HepG2 (cell line): ENCODE measurements at regions of chr9 and their contacts with region 1.

Region 1: GRCh38 chr9:113650207-113651131 is 186.9 kb downstream of the RGS3 start:
- DNase-seq: peak; percentile 94
- ATAC-seq: peak; percentile 87
- H3K4me3 ChIP-seq: peak overlapping the region in 1 of 3 experiments; percentile 17; a peak in 2 of 6 replicates
- H3K27ac ChIP-seq: peak overlapping the region; percentile 75
- H3K4me1 ChIP-seq: peaks cover 95% of the 10 kb centered on the region
- H3K27me3 ChIP-seq: no peaks in the 10 kb centered on the region
- CTCF ChIP-seq: no peak
- EP300 ChIP-seq: peak in 1 of 2 experiments; percentile 68; a peak in 3 of 4 replicates
- POLR2A ChIP-seq: peak in 1 of 2 experiments; percentile 30; a peak in 1 of 4 replicates
- RAD21 ChIP-seq: no peak

Region 2: GRCh38 chr9:113454914-113455761 is 195.3 kb before region 1 on chr9:
- CTCF ChIA-PET with region 1: no interaction called
- POLR2A ChIA-PET with region 1: interaction called, 5 read pairs
- in situ Hi-C with region 1: no loop called
- intact Hi-C with region 1: loop called (anchors 5 kb)
- DNase-seq: peak; percentile 83
- ATAC-seq: peak; percentile 95
- H3K4me3 ChIP-seq: peak overlapping the region in 1 of 3 experiments; percentile 37; a peak in 1 of 6 replicates
- H3K27ac ChIP-seq: peak overlapping the region; percentile 85
- H3K4me1 ChIP-seq: peaks cover 49% of the 10 kb centered on the region
- H3K27me3 ChIP-seq: no peaks in the 10 kb centered on the region
- CTCF ChIP-seq: no peak
- EP300 ChIP-seq: peak; percentile 29 to 67; a peak in 2 of 4 replicates
- POLR2A ChIP-seq: 0 out of 4 replicates have a peak, but pooled peaks of 1 of the 2 experiments have one; percentile 29
- RAD21 ChIP-seq: no peak

Region 3: DNA sequence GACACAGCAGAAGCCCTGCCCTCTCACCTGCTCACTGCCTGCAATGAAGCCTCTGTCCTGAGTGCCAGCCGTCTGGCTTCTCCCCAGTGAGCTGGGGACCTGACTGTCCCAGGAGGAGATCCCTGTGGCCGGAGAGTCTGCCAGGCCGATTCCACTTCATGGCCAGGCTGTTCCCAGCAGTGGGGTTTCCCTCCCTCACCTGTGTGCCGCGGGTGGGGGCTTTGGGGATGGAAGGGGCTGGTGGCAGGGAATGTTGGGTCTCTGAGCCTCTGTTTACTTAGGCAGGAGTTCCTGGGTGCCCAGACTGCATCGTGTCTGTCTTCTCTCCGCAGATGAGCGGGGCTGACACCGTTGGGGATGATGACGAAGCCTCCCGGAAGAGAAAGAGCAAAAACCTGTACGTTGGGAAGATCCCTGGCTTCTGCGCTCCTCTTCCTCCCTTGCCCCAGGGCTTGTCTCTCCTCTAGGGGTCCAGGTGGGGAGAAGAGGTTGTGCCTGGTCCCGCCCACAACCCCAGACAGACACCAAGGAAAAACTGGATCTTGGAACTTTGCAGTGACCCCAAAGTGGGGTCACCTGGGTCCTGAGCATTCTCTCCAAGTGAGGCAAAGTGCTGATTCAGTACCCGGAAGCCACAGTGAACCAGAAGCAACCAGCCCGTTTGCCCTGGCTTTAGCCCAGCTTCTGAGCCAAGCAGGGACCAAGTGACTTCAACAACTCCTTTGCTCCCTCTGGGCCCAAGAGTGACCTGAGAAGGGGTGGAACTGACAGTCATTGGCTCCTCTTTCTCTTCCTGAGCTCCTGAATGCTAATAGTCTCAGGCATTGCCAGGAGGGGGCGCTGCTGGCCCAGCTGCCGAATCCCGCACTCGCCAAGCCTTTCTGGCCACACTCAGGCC is 59.2 kb before region 1 on chr9:
- CTCF ChIA-PET with region 1: interaction called, 223 read pairs
- POLR2A ChIA-PET with region 1: interaction called, 16 read pairs
- in situ Hi-C with region 1: loop called (anchors 5 kb)
- intact Hi-C with region 1: no loop called
- DNase-seq: peak; percentile 59
- ATAC-seq: peak; percentile 71
- H3K4me3 ChIP-seq: no peak overlapping the region
- H3K27ac ChIP-seq: no peak overlapping the region
- H3K4me1 ChIP-seq: peaks cover 32% of the 10 kb centered on the region
- H3K27me3 ChIP-seq: no peaks in the 10 kb centered on the region
- CTCF ChIP-seq: peak; percentile 96
- EP300 ChIP-seq: no peak
- POLR2A ChIP-seq: no peak
- RAD21 ChIP-seq: peak; percentile 98

Region 4: DNA sequence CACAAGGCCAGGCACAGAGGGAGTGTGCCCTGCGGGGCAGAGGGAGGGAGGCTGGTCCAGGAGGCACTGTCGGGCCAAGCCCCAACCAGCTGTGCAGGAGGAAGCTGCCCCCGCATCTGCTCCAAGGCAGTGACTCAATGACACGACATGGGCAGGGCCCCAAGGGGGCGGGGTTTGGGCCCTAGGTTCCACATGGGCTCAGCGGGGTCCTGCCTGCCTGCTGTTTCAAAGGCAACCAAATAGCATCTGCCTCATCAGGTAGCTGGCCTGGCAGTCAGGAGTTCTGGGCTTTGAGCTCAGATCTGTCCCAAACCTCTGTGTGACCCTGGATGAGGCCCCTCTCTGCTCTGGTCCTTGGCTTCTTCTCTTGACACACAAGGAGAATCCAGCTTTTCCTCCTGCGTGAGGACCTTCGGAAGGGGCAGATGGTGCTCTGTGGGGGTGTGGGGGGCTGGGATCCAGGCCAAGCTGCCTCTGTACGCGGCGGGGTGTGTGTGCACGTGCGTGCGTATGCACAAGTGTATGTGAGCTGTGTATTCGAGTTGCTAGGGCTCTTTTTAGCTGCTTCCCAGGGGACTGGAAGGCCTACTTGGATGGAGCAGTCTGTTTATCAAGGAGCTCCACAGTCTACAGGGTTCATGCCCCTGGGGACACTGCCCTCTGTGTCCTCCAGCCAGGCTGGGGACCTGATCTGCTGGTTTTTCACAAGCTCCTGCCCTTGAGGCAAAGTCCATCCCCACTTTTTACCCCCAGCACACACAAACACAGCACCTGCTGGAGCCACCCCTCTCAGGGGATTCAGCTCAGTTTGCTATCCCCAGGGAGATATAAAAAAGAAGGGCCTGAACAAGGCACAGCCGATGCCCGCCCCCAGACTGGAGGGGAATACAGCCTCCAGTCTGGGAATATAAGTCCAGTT is 48.1 kb before region 1 on chr9:
- CTCF ChIA-PET with region 1: no interaction called
- POLR2A ChIA-PET with region 1: interaction called, 22 read pairs
- in situ Hi-C with region 1: no loop called
- intact Hi-C with region 1: loop called (anchors 5 kb)
- DNase-seq: peak; percentile 54
- ATAC-seq: peak; percentile 65
- H3K4me3 ChIP-seq: peak overlapping the region in 1 of 3 experiments; percentile 62; a peak in 1 of 6 replicates
- H3K27ac ChIP-seq: no peak overlapping the region
- H3K4me1 ChIP-seq: peaks cover 64% of the 10 kb centered on the region
- H3K27me3 ChIP-seq: no peaks in the 10 kb centered on the region
- CTCF ChIP-seq: 0 out of 2 replicates have a peak, but pooled peaks have one; percentile 17
- EP300 ChIP-seq: peak in 1 of 2 experiments; percentile 28; a peak in 1 of 4 replicates
- POLR2A ChIP-seq: no peak
- RAD21 ChIP-seq: no peak

Region 5: DNA sequence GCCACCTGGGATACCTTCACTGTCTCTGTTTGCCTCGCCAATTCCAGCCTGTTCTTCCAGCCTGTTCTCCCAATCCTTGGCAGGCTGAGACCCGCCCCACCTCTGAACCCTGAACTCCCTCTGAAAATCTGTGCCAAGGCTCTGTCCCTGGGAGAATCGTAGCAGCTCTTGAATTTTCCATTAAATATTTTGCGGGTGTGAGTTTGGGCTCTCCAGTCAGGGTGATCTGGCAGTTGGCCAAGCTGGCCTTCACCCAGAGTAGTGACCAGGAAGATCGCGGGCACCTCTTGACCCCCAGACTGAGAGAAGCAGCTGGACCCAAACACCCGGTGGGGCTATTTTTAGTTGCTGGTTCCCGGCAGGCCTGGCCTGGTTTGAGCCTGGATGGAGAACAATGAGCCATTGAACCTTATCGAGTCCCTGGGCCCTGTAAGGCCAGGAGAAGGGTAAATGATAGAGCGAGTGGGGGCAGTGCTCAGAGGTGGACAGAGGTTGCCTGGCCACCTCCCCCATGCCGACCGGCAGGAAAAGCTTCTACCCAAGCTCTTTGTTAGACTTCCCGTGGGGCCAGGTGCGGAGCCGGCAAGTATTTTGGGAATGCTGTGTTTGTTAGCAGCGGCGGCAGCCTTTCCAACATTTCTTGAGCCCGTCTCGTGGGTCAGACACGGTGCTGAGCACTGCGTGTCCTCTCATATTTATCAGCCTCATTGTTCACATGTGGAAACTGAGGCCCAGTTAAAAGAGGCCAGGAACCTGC is 40.7 kb before region 1 on chr9:
- CTCF ChIA-PET with region 1: no interaction called
- POLR2A ChIA-PET with region 1: interaction called, 21 read pairs
- in situ Hi-C with region 1: no loop called
- intact Hi-C with region 1: loop called (anchors 5 kb)
- DNase-seq: peak; percentile 97
- ATAC-seq: peak; percentile 99
- H3K4me3 ChIP-seq: peak overlapping the region; percentile 36 to 63 (median 39)
- H3K27ac ChIP-seq: peak overlapping the region; percentile 86
- H3K4me1 ChIP-seq: peaks cover 78% of the 10 kb centered on the region
- H3K27me3 ChIP-seq: peaks cover 0 to 6% of the 10 kb centered on the region in 2 experiments; a peak in 1 of 5 replicates
- CTCF ChIP-seq: peak; percentile 31
- EP300 ChIP-seq: peak in 1 of 2 experiments; percentile 77; a peak in 2 of 4 replicates
- POLR2A ChIP-seq: peak in 1 of 2 experiments; percentile 36; a peak in 1 of 4 replicates
- RAD21 ChIP-seq: peak; percentile 24; the same call in 1 of the 2 replicates